PC-9 (cell line): ENCODE measurements at regions of chr1 and their contacts with region 1.

Region 1: GRCh38 chr1:30707412-30708360 is 15.7 kb downstream of the MATN1 start:
- DNase-seq: peak in 1 of 2 experiments; percentile 75
- H3K4me3 ChIP-seq: no peak overlapping the region
- H3K27ac ChIP-seq: no peak overlapping the region
- H3K4me1 ChIP-seq: no peaks in the 10 kb centered on the region
- H3K27me3 ChIP-seq: no peaks in the 10 kb centered on the region
- CTCF ChIP-seq: peak; percentile 85

Region 2: DNA sequence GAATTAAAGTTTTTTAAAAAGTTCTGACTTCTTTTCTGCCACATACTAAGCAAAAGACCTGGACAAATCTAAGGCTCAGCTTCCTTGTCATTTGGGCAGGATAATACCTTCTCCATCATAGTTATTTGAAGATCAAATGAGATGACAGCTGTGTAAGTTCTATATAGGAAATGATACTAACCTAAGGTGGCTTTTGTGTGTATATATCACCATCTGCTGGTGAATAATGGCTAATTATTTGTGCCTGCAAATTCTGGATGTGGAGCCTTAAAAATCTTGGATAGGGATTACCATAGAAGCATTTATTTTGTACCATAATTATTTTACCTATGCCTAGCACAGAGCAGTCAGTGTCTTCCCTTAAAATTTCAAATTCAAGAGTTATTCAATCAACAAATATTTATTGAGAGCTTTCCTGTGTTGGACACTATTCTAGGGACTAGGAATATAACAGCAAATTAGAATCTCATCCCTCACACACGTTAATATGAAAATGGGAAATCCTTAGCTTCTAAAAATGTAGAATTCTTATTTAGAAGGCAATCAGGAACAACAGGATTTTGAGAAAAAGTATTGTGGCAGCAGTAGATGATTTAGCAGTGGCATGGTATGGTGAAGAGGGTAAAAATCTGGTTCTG is 1673.7 kb before region 1 on chr1:
- CTCF ChIA-PET with region 1: no interaction called
- POLR2A ChIA-PET with region 1: no interaction called
- intact Hi-C with region 1: loop called (anchors 10 kb)
- DNase-seq: peak in 1 of 2 experiments; percentile 40
- H3K4me3 ChIP-seq: no peak overlapping the region
- H3K27ac ChIP-seq: no peak overlapping the region
- H3K4me1 ChIP-seq: no peaks in the 10 kb centered on the region
- H3K27me3 ChIP-seq: no peaks in the 10 kb centered on the region
- CTCF ChIP-seq: peak; percentile 72

Region 3: GRCh38 chr1:29379443-29380073 is 1328.1 kb before region 1 on chr1:
- CTCF ChIA-PET with region 1: no interaction called
- POLR2A ChIA-PET with region 1: no interaction called
- intact Hi-C with region 1: loop called (anchors 2 kb)
- DNase-seq: peak in 1 of 2 experiments; percentile 18
- H3K4me3 ChIP-seq: no peak overlapping the region
- H3K27ac ChIP-seq: no peak overlapping the region
- H3K4me1 ChIP-seq: no peaks in the 10 kb centered on the region
- H3K27me3 ChIP-seq: peaks cover 14% of the 10 kb centered on the region
- CTCF ChIP-seq: peak; percentile 77

Region 4: DNA sequence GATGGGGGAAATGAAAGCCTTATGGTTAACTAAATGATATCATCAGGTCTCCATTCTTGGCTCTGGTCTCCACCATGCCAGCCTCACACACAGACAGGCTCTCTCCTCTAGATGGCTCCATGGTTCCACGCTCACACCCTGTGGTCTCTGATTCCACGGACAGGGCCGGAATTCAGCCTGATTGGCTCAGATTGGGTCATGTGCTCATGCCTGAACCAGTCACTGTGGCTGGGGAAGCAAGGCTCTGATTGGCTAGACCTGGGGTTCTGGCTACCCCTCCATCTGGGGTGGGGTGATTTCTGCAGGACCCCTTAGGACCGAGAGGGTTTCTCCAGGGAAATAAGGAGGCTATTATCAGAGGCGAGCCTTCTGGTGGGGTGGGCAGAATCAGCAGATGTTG is 1194.3 kb before region 1 on chr1:
- CTCF ChIA-PET with region 1: no interaction called
- POLR2A ChIA-PET with region 1: no interaction called
- intact Hi-C with region 1: loop called (anchors 2 kb)
- DNase-seq: peak; percentile 42 to 54
- H3K4me3 ChIP-seq: no peak overlapping the region
- H3K27ac ChIP-seq: no peak overlapping the region
- H3K4me1 ChIP-seq: no peaks in the 10 kb centered on the region
- H3K27me3 ChIP-seq: no peaks in the 10 kb centered on the region
- CTCF ChIP-seq: peak; percentile 73

Region 5: GRCh38 chr1:30379684-30380624 is 327.7 kb before region 1 on chr1:
- CTCF ChIA-PET with region 1: interaction called, 4 read pairs
- POLR2A ChIA-PET with region 1: no interaction called
- intact Hi-C with region 1: loop called (anchors 5 kb)
- DNase-seq: peak in 1 of 2 experiments; percentile 32
- H3K4me3 ChIP-seq: no peak overlapping the region
- H3K27ac ChIP-seq: no peak overlapping the region
- H3K4me1 ChIP-seq: no peaks in the 10 kb centered on the region
- H3K27me3 ChIP-seq: peaks cover 19% of the 10 kb centered on the region; the same call in 1 of the 2 replicates
- CTCF ChIP-seq: peak; percentile 74

Region 6: GRCh38 chr1:30645807-30646206 is 61.9 kb before region 1 on chr1:
- CTCF ChIA-PET with region 1: no interaction called
- POLR2A ChIA-PET with region 1: no interaction called
- intact Hi-C with region 1: no loop called
- DNase-seq: peak in 1 of 2 experiments; percentile 37
- H3K4me3 ChIP-seq: no peak overlapping the region
- H3K27ac ChIP-seq: no peak overlapping the region
- H3K4me1 ChIP-seq: peaks cover 11% of the 10 kb centered on the region
- H3K27me3 ChIP-seq: no peaks in the 10 kb centered on the region
- CTCF ChIP-seq: no peak